ENCODE measurements at regions of chr20 and their contacts with region 1.

Region 1: DNA sequence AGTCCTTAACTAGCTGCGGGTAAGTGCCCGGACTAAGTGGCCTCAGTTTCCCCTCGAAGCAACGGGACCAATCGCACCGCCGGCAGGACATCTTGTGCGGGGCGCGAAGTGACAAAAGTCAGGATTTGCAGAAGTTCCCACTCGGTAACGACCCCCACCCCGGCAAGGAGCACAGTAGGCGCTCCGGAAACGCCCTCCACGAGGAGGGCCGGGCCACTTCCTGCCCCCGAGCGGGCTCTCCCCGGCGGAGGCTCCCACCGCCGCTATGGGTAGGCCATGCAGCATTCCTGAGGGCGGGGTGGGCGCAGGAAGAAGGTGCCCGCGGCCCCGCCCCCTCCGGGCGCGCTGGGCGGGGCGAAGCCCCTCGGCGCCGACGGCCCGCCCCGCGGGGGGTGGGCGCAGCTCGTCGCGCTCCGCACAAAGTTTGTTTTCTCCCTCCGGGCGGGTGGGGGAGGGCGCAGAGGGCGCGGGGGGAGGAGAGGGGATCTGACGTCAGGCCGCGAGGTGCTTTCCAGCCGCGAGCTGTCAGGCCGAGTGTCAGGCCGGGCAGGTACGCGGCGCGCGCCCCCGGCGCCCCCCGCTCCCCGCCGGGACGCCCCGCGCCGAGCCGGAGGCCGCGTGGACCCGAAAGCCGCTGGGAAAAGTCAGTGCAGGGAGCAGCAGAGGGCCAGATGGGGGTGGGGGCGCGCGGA is at the start of gene TGIF2:
- DNase-seq: peak; percentile 95
- H3K4me3 Mint-ChIP-seq: peak within 1 kb of the TSS; percentile 93
- H3K27ac Mint-ChIP-seq: peak within 1 kb of the TSS; percentile 99
- H3K4me1 Mint-ChIP-seq: peaks cover 34% of the 10 kb centered on the region
- H3K27me3 Mint-ChIP-seq: no peaks in the 10 kb centered on the region
- total RNA-seq, gene TGIF2: 55.2 and 55.7 TPM in 2 replicates

Region 2: DNA sequence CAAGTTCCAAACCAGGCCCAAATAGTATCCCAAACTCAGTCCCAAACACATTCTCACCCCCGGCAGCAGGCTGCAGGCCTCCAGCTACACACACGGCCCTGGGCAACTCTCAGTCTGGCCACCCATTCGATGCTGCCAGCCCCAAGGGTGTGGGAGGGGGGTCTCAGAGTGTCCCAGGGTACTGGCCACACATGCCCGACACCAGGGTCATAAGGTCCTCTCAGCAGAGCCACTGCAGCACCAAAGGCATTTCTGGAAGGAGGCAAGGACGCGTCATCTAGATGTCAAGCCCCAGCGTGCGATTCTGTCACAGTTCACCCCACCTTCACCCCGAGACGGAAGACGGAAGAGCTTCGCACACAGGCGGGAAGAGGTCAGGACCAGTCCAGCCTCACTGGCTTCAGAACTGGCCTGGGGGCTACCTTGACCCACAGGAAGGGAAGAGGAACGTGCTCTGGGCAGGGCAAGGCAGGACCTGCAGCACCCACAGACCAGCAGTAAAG is 22.4 kb before region 1 on chr20:
- intact Hi-C with region 1: loop called (anchors 2 kb)
- DNase-seq: no peak
- H3K4me3 Mint-ChIP-seq: no peak overlapping the region
- H3K27ac Mint-ChIP-seq: no peak overlapping the region
- H3K4me1 Mint-ChIP-seq: no peaks in the 10 kb centered on the region
- H3K27me3 Mint-ChIP-seq: no peaks in the 10 kb centered on the region

Region 3: GRCh38 chr20:36591854-36592641 is 18.8 kb after region 1 on chr20:
- intact Hi-C with region 1: loop called (anchors 1 kb)
- DNase-seq: peak; percentile 83
- H3K4me3 Mint-ChIP-seq: peak overlapping the region; percentile 65
- H3K27ac Mint-ChIP-seq: peak overlapping the region; percentile 77
- H3K4me1 Mint-ChIP-seq: peaks cover 53% of the 10 kb centered on the region
- H3K27me3 Mint-ChIP-seq: no peaks in the 10 kb centered on the region

Region 4: DNA sequence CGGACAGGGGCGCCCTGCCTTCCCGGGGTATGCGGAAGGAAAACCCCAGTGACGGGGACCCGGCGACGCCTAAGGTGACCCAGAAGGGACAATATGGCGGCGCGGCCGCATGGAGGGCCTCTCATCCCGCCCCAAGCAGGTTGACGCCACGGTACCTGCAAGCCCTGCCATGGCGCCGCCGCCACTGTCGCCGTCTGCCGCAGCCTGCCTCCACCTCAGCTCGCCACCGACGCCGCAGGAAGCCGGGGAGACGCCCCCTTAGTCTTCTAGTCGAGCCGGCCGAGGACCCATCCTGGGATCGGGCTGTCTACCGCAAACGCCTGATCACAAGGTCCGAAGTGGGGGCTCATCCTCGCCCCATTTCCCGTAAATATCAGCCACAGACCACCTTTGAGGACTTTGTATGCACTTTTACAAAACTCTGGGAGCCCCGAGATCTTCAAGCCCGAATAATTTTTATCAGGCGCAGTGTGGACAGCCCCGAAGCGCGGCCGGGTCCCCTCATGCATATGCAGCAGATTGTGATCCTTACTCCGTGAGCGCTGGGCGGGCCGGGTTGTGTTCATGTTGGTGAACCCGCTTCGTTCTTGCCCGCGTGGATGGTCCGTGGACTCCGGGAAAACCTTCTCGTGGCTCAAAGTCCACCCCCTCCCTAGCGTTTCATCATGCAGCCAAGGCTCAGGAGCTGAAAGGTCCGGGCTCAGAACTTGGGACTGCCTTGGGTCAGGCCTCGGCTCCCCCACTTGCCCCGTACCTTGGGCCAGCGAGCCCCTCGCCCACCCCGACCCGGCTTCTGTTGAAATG is 954.6 kb after region 1 on chr20 and contains the start of gene BLCAP:
- intact Hi-C with region 1: loop called (anchors 10 kb)
- DNase-seq: peak; percentile 98
- H3K4me3 Mint-ChIP-seq: peak within 1 kb of the TSS; percentile 92
- H3K27ac Mint-ChIP-seq: peak within 1 kb of the TSS; percentile 100
- H3K4me1 Mint-ChIP-seq: peaks cover 42% of the 10 kb centered on the region
- H3K27me3 Mint-ChIP-seq: peaks cover 5% of the 10 kb centered on the region
- total RNA-seq, gene BLCAP: 31.7 and 31.9 TPM in 2 replicates